OCI-LY7 (cell line): ENCODE measurements at regions of chr16 and their contacts with region 1.

Region 1: GRCh38 chr16:69123910-69124309 is 8.5 kb downstream of the CHTF8 start:
- DNase-seq: peak; percentile 77
- H3K4me3 ChIP-seq: no peak overlapping the region
- H3K27ac ChIP-seq: no peak overlapping the region
- H3K4me1 ChIP-seq: no peaks in the 10 kb centered on the region
- CTCF ChIP-seq: peak; percentile 83

Region 2: DNA sequence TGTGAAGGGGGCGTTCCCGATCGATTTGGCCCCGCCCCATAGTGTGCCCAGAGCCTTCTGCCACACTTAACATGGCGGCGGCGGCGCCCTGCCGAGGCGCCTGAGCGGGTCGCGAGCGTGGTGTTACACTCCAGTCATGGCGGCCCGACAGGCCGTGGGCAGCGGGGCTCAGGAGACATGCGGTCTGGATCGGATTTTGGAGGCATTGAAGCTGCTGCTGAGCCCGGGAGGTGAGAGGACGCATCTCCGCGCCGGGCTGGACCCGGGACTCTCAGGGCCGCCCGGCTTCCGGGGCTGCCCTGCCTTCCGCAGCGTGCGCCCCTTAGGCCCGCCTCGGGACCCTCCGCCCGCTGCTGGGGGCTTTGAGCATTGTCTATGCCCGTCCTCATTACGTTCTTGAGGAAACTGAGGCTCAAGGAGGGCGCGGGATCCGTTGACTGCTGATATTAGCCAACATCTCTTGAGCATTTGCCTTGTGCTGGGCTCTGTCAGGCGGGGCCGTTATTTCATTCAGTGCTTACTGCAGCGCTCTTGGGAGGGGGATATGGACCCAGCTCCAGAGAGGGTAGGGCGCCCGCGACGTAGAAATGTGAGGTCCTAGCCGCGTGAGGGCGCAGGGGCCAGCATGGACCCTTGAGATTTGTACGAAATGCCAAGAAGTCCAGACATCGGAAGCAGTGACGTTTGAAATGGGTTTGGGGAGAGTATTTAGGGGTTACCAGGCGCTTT is 280.3 kb before region 1 on chr16 and contains the start of gene TANGO6:
- CTCF ChIA-PET with region 1: interaction called, 3 read pairs
- POLR2A ChIA-PET with region 1: no interaction called
- intact Hi-C with region 1: loop called (anchors 2 kb)
- DNase-seq: peak; percentile 91
- H3K4me3 ChIP-seq: peak within 1 kb of the TSS; percentile 76
- H3K27ac ChIP-seq: peak within 1 kb of the TSS; percentile 67
- H3K4me1 ChIP-seq: peaks cover 9% of the 10 kb centered on the region
- CTCF ChIP-seq: peak; percentile 81
- total RNA-seq, gene TANGO6: 17.3 and 22.8 TPM in 2 replicates